ENCODE measurements at regions of chr15 and their contacts with region 1.

Region 1: DNA sequence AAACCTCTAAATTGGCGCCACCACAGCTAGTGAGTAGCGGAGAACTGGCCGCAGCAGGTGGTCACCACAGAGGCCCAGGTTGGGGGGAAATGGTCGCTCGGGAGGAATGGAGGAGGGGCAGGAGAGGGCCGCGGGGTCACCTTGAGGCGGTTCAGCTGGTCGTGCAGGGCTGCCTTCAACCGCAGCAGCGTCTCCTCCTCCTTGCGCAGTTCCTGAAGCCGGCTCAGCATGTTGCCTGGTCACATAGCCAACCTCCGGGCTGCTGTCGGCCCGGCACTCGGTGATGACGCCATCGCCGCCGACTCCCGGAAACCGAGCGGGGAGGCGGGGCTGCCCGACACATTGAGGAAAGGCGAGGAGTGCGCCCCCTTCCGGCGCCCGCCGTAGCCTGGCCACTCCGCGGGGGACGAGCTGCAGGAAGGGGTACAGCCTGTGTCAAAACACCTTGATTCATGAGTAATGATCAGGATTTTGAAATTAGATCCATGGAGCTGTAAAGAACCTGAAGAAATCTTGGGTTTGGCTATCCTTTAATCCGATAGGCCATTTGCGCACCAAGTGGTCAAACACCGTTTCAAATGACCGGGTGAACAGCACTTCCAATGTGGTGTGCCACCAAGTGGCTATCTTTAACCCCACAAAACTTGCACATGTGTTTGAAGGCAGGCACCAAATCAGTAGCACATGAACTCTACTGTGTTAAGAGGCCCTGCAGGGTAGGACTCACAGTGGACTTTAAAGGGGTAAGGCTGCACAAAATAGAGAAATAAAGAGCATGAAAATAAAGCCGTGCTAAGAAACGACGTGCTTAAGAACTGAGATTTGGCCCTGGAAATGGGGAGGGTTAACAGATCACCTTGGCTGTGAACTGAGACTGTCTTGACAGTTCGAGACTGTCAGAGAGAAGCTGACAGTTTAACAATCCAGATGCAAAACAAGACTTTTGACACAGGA is at the start of gene SNAPC5:
- DNase-seq: peak; percentile 99
- total RNA-seq, gene SNAPC5: 19.5 to 26.2 TPM

Region 2: GRCh38 chr15:66386204-66387123 is 111.3 kb before region 1 on chr15 and contains the start of gene MAP2K1:
- intact Hi-C with region 1: loop called (anchors 5 kb)
- DNase-seq: peak; percentile 100
- total RNA-seq, gene MAP2K1: 36.6 to 70.4 TPM